OCI-LY7 (cell line): ENCODE measurements at regions of chr6 and their contacts with region 1.

Region 1: DNA sequence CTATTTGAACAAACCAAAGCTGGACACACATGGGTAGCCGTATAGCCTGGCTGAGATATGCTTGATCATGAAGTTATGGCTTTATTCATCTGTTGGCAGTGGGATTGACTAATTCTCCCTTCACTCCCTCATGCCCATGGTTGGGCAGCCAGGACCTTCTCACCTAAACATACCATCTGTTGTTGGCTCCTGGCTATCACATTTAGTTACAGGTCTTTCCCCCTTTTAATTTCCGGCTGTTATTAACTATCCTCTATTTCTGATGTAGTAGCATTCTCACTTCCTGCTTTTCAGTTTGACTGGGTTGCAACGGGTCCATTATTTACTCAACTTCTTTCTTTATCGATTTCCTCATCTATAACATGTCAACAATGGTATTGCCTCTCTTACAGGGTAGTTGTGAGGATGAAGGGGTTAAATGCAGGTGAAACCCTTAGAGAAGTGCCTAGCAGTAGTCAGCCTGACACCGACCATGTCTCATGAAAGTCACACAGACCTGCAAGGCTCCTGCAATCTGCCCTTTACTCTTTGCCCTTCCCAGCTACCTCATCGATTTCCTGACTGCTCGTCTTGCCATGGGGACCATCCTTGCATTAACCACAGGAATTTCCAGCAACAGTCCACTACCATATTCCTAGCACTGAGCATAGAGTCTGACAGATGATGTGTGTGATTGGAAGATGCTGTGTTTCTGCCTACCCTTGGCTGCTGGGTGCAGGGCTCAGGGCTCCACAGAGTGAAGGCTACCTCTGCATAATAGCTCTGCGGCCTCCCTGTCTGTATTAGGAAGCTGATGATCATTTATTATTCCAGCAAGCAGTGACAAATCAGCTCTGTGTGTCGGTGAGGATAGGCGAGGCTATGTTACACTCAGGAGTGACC is 42.2 kb downstream of the PPP1R14C start:
- DNase-seq: peak; percentile 57
- H3K4me3 ChIP-seq: peak overlapping the region; percentile 19
- H3K27ac ChIP-seq: peak overlapping the region; percentile 56
- H3K4me1 ChIP-seq: peaks cover 49% of the 10 kb centered on the region
- CTCF ChIP-seq: no peak

Region 2: DNA sequence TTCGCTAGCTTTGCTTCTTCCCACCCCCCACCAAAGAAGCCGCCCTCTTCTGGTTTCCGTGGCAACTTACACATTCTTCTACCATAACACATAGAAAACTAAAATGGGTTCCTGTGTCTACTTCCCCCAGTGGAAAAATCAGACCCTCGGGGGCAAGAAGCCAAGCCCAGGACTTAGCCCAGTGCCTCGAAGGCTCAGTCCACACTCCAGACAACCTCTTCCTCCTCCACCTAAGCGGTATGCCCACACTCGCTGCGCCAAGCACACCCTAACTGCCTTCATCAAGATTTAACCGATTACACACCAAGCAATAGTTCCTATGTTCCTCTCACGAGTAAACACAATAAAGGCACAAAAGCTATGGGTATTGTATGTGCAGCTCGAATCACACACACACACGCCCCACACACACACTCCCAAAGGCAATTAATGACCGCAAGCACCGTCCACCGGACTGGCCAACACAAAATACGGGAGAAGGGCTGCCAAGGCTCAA is 639.8 kb before region 1 on chr6:
- CTCF ChIA-PET with region 1: no interaction called
- POLR2A ChIA-PET with region 1: no interaction called
- intact Hi-C with region 1: no loop called
- DNase-seq: peak; percentile 70
- H3K4me3 ChIP-seq: peak overlapping the region; percentile 92
- H3K27ac ChIP-seq: peak overlapping the region; percentile 86
- H3K4me1 ChIP-seq: peaks cover 26% of the 10 kb centered on the region
- CTCF ChIP-seq: peak; percentile 71

Region 3: DNA sequence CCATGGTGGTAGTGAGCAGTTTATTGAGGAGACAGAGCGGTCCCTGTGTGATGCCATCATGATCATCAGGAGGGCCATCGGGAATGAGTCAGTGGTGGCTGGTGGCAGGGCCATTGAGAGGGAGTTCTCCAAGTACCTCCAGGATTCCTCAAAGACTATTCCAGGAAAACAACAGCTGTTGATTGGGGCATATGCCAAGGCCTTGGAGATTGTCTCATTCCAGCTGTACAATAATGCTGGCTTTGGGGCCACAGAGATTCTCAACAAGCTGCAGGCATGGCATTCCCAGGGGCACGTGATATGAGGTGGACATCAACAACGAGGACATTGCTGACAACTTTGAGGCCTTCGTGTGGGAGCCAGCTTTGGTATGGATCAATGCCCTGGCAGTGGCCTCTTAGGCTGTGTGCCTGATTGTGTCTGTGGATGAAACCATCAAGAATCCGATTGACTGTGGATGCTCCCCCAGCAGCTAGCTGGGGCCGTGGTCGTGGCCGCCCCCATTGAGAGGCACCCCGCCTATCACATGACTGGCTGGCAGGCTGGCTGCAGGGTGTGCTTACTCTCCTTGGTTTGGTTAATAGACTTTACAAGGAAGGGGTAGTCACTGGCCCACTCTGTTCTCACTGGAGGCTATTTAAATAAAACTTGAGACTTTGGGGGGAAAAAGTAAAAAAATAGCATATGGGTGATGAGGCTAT is 303.9 kb before region 1 on chr6:
- CTCF ChIA-PET with region 1: no interaction called
- POLR2A ChIA-PET with region 1: no interaction called
- intact Hi-C with region 1: no loop called
- DNase-seq: no peak
- H3K4me3 ChIP-seq: no peak overlapping the region
- H3K27ac ChIP-seq: no peak overlapping the region
- H3K4me1 ChIP-seq: no peaks in the 10 kb centered on the region
- CTCF ChIP-seq: no peak

Region 4: DNA sequence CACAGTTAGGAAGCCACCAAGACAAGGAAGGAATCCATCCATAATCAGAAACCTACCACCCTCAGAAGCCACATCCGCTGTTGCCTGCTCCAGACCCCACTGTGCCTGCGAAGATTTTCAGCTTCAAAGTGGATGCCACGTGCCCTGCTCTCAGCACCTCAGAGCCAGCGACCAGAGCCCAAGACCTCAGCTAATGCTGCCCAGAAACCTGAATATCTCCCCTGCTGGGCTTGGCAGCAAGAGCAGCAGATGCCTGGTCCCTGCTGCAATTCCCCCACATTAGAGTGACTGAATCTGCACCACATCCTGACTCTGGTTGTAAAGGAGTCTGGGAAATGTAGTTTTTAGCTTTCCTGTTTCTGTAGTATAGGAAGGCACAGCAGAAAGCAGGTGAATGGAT is 105.5 kb before region 1 on chr6:
- CTCF ChIA-PET with region 1: interaction called, 4 read pairs
- POLR2A ChIA-PET with region 1: interaction called, 3 read pairs
- intact Hi-C with region 1: loop called (anchors 1 kb)
- DNase-seq: peak; percentile 24
- H3K4me3 ChIP-seq: no peak overlapping the region
- H3K27ac ChIP-seq: no peak overlapping the region
- H3K4me1 ChIP-seq: no peaks in the 10 kb centered on the region
- CTCF ChIP-seq: no peak

Region 5: DNA sequence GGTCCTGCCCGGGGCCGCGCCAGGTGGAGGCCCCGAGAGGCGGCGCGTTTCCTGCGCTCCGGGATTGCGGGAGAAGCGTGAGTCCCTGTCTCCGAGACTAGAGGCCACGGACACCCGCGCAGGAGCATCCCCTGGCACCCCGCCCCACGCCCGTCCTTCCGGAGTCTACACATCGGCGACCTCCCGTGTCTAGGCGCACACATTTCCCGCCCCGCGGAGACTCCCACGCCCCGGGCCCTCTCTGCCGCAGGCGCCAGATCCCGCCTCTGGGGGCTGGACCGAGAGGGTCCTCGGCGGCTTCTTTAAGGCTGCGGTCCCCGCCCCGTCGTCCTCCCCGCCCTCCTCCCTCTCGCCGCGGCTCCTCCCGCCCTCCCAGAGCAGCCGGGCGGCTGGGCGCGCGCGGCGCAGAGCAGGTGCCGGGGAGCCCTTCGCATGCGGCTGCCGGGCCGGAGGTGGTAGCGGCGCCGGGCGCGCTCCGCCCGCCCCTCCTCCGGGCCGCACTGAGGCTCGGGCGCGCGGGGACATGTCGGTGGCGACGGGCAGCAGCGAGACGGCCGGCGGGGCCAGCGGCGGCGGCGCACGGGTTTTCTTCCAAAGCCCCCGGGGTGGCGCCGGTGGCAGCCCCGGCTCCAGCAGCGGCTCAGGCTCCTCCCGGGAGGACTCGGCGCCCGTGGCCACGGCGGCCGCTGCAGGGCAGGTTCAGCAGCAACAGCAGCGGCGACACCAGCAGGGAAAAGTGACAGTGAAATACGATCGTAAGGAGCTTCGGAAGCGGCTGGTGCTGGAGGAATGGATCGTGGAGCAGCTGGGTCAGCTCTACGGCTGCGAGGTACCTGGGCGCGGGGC is 42.2 kb before region 1 on chr6 and contains the start of gene PPP1R14C:
- CTCF ChIA-PET with region 1: no interaction called
- POLR2A ChIA-PET with region 1: interaction called, 3 read pairs
- intact Hi-C with region 1: loop called (anchors 5 kb)
- DNase-seq: no peak
- H3K4me3 ChIP-seq: peak within 1 kb of the TSS; percentile 40
- H3K27ac ChIP-seq: no peak within 1 kb of the TSS
- H3K4me1 ChIP-seq: peaks cover 13% of the 10 kb centered on the region
- CTCF ChIP-seq: no peak
- total RNA-seq, gene PPP1R14C: not detected in 2 replicates

Region 6: GRCh38 chr6:150169609-150170008 is 15.5 kb before region 1 on chr6:
- CTCF ChIA-PET with region 1: interaction called, 8 read pairs
- POLR2A ChIA-PET with region 1: interaction called, 17 read pairs
- intact Hi-C with region 1: loop called (anchors 1 kb)
- DNase-seq: no peak
- H3K4me3 ChIP-seq: no peak overlapping the region
- H3K27ac ChIP-seq: no peak overlapping the region
- H3K4me1 ChIP-seq: peaks cover 25% of the 10 kb centered on the region
- CTCF ChIP-seq: no peak

Region 7: GRCh38 chr6:150195996-150196417 is 10.9 kb after region 1 on chr6:
- CTCF ChIA-PET with region 1: no interaction called
- POLR2A ChIA-PET with region 1: interaction called, 10 read pairs
- intact Hi-C with region 1: no loop called
- DNase-seq: no peak
- H3K4me3 ChIP-seq: no peak overlapping the region
- H3K27ac ChIP-seq: no peak overlapping the region
- H3K4me1 ChIP-seq: peaks cover 4% of the 10 kb centered on the region
- CTCF ChIP-seq: no peak

Region 8: DNA sequence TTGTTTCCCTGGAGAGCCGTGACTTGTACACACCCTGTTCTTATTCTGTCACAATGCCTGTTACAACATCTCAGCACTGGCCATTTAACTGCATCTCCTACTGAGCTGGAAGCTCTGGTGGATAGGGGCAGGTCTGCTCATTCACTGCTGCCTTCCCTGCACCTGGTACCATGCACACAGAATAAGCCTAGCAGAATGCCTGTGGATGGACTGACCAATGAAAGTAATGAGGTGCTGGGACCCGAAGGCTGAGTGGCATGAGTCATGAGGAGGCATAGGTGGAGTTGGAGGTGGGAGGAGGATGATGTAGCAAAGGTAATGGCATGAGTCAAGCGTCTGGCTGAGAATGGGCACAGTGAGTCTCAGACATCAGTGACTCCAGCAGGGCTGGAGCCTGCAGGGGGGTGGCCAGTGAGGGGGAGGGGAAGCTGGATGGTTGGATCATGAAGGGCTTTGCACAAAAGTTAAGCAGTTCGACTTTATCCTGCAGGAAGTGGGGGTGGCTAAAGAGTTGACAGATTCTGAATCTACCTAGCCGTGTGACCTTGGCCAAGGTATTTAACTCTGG is 84.6 kb after region 1 on chr6:
- CTCF ChIA-PET with region 1: no interaction called
- POLR2A ChIA-PET with region 1: interaction called, 5 read pairs
- intact Hi-C with region 1: loop called (anchors 2 kb)
- DNase-seq: no peak
- H3K4me3 ChIP-seq: no peak overlapping the region
- H3K27ac ChIP-seq: no peak overlapping the region
- H3K4me1 ChIP-seq: peaks cover 44% of the 10 kb centered on the region
- CTCF ChIP-seq: no peak

Region 9: GRCh38 chr6:150334790-150335783 is 150.0 kb after region 1 on chr6:
- CTCF ChIA-PET with region 1: no interaction called
- POLR2A ChIA-PET with region 1: no interaction called
- intact Hi-C with region 1: loop called (anchors 2 kb)
- DNase-seq: peak; percentile 74
- H3K4me3 ChIP-seq: no peak overlapping the region
- H3K27ac ChIP-seq: no peak overlapping the region
- H3K4me1 ChIP-seq: peaks cover 8% of the 10 kb centered on the region
- CTCF ChIP-seq: peak; percentile 98

Region 10: DNA sequence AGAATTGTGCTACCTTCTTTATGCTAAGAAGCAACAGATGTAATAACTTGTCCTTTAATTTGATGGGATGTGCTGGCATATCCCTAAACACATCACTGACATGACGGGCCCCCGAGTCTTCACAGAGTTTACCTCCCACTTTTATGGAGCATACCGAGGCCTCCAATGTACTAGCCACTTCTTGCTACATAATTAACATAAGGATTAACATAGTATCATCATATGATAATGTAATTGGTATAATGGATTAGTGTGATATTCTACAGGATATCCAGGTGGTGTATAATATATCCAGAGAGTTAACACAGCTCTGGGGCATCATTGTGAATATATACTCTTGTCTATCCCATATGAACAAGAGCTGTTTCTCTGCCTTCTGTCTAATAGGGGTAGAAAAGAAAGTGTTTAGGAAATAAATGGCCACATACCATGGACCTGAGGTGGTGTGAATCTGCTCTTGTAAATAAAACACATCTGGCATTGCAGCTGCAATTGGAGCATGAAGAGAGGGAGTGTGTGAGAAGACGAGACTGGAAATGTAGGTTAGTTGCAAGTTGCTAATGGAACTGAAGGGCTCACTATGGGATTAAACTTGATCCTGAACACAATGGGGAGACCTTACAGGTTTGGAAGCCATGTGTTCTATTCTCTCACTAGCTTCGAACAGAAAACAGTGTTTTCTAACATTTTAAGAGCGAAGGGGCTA is 286.0 kb after region 1 on chr6:
- CTCF ChIA-PET with region 1: no interaction called
- POLR2A ChIA-PET with region 1: no interaction called
- intact Hi-C with region 1: no loop called
- DNase-seq: no peak
- H3K4me3 ChIP-seq: no peak overlapping the region
- H3K27ac ChIP-seq: no peak overlapping the region
- H3K4me1 ChIP-seq: no peaks in the 10 kb centered on the region
- CTCF ChIP-seq: no peak